Uterus (tissue), 4 donors: ENCODE measurements at regions of chr3 and their contacts with region 1.

Region 1: GRCh38 chr3:64533617-64534317 is 154.0 kb downstream of the ADAMTS9 start:
- DNase-seq: peak; percentile 92
- H3K4me3 ChIP-seq: no peak overlapping the region
- H3K27ac ChIP-seq: peak overlapping the region; percentile 12 to 51
- H3K4me1 ChIP-seq: no peaks in the 10 kb centered on the region
- H3K27me3 ChIP-seq: no peaks in the 10 kb centered on the region
- CTCF ChIP-seq: peak; percentile 88 to 94 (median 90)
- POLR2A ChIP-seq: no peak

Region 2: GRCh38 chr3:64666171-64666588 is 132.4 kb after region 1 on chr3:
- intact Hi-C with region 1: no loop called
- DNase-seq: no peak
- H3K4me3 ChIP-seq: no peak overlapping the region
- H3K27ac ChIP-seq: peak overlapping the region in 1 of 2 donors; percentile 48
- H3K4me1 ChIP-seq: peaks cover 0 to 3% of the 10 kb centered on the region in 2 donors
- H3K27me3 ChIP-seq: no peaks in the 10 kb centered on the region
- CTCF ChIP-seq: no peak
- POLR2A ChIP-seq: no peak

Region 3: DNA sequence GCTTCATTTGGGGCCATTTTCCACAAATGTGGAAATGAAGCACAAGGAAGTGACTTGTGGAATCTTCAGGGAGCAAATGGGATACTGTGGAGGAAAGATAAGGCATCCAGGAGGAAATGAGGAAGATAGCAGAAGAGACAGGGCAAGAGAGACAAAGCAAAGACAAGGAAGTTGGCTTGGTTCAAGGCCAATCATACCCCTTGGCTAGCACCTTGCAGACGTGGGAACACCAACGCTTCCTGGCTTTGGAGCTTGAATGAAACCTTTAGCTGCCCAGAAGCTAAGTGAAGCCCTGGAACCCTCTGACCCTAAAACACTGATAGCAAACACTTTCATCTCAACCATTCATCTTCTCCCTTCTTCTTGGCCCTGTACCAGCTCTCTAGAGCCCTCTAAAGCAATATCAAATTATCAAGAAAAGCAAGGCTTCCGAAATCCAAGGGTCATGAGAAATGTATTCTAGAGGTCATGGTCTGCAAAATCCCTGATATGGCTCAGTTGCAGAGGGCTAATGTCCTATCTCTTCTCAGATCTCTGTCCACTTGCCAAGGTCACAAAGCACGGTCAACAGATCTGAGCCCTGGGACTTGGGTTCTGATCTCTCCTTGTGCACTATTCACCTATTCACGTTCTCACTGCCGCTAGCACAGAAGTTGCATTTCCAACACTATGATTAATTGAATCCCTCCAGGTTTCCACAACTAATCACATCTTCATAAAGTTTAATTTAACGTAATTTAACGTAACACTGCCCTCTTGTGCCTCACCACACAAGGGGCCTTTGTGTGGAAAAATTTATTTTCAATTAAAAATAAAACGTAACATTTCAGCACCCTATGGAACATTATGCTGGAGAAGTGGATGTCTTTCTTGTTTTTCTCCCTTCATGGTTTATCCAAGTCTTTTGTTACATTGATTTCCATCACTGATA is 711.6 kb after region 1 on chr3:
- intact Hi-C with region 1: loop called (anchors 5 kb)
- DNase-seq: peak in 1 of 2 donors; percentile 13
- H3K4me3 ChIP-seq: no peak overlapping the region
- H3K27ac ChIP-seq: no peak overlapping the region
- H3K4me1 ChIP-seq: no peaks in the 10 kb centered on the region
- H3K27me3 ChIP-seq: no peaks in the 10 kb centered on the region
- CTCF ChIP-seq: peak; percentile 53 to 67 (median 60)
- POLR2A ChIP-seq: no peak